ENCODE measurements at regions of chr19 and their contacts with region 1.

Region 1: GRCh38 chr19:11964858-11965645 is at the start of gene ZNF763:
- DNase-seq: peak; percentile 83 to 97
- H3K4me3 ChIP-seq: peak within 1 kb of the TSS; percentile 72 to 87
- H3K27ac ChIP-seq: peak within 1 kb of the TSS; percentile 94
- H3K4me1 ChIP-seq: peaks cover 9 to 17% of the 10 kb centered on the region in 2 donors
- H3K27me3 ChIP-seq: no peaks in the 10 kb centered on the region
- CTCF ChIP-seq: no peak
- total RNA-seq, gene ZNF763: 2.8 TPM

Region 2: DNA sequence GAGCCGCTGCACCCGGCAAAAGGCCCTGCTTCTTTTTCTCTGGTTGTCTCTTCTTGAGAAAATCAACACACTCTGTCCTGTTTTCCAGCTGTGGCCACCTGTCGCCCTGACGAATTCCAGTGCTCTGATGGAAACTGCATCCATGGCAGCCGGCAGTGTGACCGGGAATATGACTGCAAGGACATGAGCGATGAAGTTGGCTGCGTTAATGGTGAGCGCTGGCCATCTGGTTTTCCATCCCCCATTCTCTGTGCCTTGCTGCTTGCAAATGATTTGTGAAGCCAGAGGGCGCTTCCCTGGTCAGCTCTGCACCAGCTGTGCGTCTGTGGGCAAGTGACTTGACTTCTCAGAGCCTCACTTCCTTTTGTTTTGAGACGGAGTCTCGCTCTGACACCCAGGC is 858.6 kb before region 1 on chr19:
- intact Hi-C with region 1: no loop called
- DNase-seq: no peak
- H3K4me3 ChIP-seq: no peak overlapping the region
- H3K27ac ChIP-seq: no peak overlapping the region
- H3K4me1 ChIP-seq: no peaks in the 10 kb centered on the region
- H3K27me3 ChIP-seq: no peaks in the 10 kb centered on the region
- CTCF ChIP-seq: no peak

Region 3: DNA sequence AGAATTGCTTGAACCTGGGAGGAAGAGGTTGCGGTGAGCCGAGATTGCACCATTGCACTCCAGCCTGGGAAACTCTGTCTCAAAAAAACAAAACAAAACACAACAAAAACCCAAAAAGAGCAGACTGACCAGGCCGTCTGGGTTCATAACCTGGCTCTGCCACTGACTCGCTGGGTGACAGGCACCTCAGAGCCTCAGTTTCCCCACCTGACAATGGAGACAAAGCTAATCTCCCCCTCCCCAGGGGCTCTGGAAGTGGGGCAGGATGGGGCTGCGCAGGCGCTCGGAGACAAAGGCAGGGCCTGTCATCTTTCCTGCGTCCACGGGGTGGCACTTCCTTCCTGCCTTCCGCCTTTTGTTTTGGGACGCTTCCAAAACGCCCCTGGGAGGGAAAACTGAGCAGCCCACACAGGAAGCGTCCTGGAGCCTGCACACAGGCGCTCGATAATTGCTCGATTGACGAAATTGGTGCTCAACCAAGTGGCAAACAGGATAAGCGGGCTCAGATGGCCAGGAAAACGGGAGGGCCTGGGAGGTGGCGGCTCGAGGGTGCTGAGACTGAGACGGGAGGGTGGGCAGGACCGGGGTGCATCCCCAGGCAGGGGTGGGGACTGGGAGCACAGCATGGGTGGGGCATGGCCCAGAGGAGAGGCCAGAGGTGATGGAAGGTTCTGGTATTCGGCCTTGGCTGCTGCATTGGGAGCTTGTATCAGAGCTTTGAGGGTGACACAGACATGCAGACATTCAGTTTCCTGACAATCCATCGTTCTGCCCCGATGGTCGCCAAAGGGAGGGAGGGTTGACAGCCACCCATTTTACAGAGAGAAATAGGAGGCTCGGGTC is 827.3 kb before region 1 on chr19:
- intact Hi-C with region 1: loop called (anchors 5 kb)
- DNase-seq: peak; percentile 25 to 91
- H3K4me3 ChIP-seq: peak overlapping the region; percentile 24 to 55
- H3K27ac ChIP-seq: peak overlapping the region; percentile 97
- H3K4me1 ChIP-seq: peaks cover 33 to 43% of the 10 kb centered on the region in 2 donors
- H3K27me3 ChIP-seq: no peaks in the 10 kb centered on the region
- CTCF ChIP-seq: peak; percentile 80 to 95 (median 93)

Region 4: GRCh38 chr19:11482384-11483050 is 482.5 kb before region 1 on chr19:
- intact Hi-C with region 1: no loop called
- DNase-seq: peak; percentile 49 to 87
- H3K4me3 ChIP-seq: peak overlapping the region; percentile 34 to 44
- H3K27ac ChIP-seq: no peak overlapping the region
- H3K4me1 ChIP-seq: peaks cover 3 to 9% of the 10 kb centered on the region in 2 donors
- H3K27me3 ChIP-seq: peaks cover 24% of the 10 kb centered on the region
- CTCF ChIP-seq: peak; percentile 84 to 96 (median 95)

Region 5: DNA sequence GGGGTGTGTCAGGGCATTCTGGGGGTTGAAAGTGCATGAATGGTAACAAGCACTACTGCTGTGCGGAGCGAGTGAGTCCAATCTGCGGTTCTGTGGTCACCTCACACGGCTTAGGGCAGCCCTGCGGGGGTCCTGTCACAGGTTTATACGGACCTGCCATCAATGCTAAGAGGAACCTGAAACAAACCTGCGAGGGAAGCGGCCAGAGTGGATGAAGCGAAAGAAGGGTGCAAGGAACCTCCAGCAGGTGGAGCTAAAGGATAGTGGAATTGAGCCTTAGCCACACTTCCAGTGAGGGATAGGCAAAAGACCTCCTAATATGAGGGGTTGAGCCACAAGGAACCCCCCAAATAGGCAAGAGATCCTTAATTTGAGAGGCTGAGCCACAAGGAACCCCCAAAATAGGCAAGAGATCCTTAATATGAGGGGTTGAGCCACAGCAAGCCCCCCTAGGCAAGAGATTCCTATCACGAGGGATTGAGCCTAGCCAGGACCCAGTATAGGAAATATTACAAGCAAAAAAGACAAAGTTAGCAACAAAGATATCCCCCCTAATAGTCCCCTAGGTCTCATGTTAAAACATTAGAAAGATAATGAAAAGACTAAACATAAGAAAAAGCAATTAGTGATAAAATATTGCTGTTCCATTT is 83.8 kb before region 1 on chr19:
- intact Hi-C with region 1: loop called (anchors 5 kb)
- DNase-seq: no peak
- H3K4me3 ChIP-seq: no peak overlapping the region
- H3K27ac ChIP-seq: no peak overlapping the region
- H3K4me1 ChIP-seq: no peaks in the 10 kb centered on the region
- H3K27me3 ChIP-seq: no peaks in the 10 kb centered on the region
- CTCF ChIP-seq: peak; percentile 37 to 63 (median 47)

Region 6: DNA sequence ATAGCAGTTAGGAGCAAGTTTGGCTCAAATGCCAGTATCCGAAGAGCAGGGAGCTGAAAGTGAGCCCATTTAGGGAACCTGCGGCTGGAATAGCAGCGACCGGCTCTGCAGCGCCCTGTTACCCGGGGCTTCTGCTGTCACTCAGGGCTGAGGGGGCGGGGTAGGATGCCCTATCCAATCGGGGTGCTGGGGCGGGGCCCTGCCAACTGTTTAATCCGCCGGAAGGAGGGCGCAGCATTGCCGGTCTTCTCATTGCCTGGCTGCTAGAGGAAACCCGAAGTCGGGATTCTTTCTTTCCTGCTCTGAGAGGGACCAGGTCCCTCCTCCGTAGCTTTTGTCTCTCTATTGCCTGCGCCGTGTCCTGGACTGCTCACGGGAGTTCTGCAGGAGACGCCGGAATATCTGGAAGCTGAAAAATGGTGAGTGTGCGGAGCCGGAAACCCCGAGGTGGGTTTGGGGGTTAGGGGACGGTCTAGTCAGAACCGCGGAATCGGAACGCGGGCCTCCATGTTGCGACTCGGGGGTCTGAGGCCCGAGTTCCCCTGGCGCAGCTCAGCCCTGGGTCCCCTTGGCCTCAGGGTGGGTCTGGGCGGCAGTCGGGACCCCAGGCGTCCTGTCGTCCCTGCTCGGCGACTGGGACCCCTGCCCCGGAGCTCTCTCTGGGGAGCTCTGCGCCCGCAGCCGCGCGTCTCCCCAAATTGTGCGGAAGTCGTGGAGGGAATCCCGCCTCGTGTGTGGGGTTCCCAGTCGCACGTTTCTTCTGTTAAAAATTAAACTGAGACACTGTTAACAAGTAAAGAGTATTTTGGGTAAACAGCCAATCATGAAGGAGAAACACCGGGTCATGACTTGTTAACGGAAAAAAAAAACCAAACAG is 22.6 kb after region 1 on chr19:
- intact Hi-C with region 1: loop called (anchors 1 kb)
- DNase-seq: peak; percentile 90 to 98
- H3K4me3 ChIP-seq: peak overlapping the region; percentile 80 to 92
- H3K27ac ChIP-seq: peak overlapping the region; percentile 83 to 88
- H3K4me1 ChIP-seq: no peaks in the 10 kb centered on the region
- H3K27me3 ChIP-seq: no peaks in the 10 kb centered on the region
- CTCF ChIP-seq: no peak

Region 7: DNA sequence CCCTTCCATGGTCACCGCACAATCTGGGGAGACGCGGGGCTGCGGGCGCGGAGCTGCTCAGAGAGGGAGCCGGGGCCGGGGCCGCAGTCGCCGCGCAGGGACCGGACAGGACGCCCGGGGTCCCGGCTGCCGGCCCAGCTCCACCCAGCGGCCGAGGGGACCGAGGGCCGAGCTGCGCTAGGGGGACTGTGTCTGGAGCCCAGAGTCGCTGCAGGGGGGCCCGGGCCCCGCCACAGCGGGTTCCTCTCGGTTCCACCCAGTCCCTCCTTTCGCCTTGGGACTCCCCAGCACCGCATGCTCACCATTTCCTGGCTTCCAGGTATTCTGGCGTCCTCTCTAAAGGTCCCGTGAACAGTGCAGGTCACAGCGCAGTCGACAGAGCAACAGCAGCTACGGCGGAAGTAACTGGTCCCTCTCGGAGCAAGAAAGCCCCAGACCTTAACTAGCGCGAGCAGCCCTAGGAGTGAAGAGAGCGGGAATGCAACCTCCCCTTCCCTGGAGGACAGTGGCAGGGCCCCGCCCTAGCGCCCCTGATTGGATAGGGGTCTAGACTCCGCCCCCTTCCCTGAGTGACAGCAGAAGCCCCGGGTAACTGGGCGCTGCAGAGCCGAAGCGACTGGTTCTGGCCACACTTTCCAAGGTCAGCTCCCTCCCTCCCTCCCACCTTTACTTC is 87.6 kb after region 1 on chr19 and contains the start of gene ZNF878:
- intact Hi-C with region 1: loop called (anchors 5 kb)
- DNase-seq: peak; percentile 63 to 93
- H3K4me3 ChIP-seq: peak within 1 kb of the TSS; percentile 77 to 83
- H3K27ac ChIP-seq: peak within 1 kb of the TSS; percentile 59 to 65
- H3K4me1 ChIP-seq: peaks cover 0 to 2% of the 10 kb centered on the region in 2 donors
- H3K27me3 ChIP-seq: no peaks in the 10 kb centered on the region
- CTCF ChIP-seq: peak in 2 of 3 experiments; percentile 7 to 11
- total RNA-seq, gene ZNF878: not detected

Region 8: DNA sequence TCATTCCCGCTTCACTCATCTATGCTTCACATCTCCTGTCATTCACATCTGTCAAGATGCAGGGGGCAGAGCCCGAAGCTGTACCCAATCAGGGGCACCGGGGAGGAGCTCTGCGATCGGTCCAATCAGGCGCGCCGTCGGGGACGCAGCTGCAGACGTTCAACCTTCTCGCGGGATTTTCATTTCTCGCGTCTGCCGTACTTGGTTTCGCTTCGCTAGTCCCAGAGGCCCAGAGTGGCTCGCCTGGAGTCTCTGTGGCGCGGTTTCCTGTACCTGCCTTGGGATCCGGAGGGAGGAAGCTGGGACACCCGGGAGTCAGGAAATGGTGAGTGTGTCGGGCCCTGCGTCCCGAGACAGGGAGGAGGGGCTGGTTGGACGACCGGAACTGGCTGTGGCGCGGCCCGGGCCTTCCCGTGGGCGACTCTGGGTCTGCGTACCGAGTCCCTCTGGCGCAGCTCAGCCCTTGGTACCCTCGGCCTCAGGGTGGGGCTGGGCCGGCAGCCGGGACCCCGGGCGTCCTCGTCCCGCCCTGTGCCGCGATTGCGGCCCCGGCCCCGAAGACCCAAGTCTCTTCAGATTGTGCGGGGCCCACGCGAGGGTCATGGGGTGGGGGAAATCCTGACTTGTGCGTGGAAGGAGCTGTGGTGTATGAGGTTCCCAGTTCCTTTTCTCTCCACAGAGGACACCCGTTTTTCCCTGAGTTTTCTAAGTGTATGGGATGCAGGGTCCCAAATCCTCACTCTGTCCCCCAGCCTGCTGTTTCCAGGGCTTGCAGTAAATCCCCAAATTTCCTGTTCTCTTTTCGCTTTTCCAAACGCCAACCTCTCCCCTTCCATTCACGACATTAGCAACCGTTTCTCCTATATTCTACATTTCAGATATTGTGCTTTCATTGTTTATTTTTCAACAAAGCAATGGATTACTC is 198.1 kb after region 1 on chr19 and contains the start of gene ZNF136:
- intact Hi-C with region 1: loop called (anchors 5 kb)
- DNase-seq: peak; percentile 89 to 96
- H3K4me3 ChIP-seq: peak within 1 kb of the TSS; percentile 83 to 84
- H3K27ac ChIP-seq: peak within 1 kb of the TSS; percentile 90 to 94
- H3K4me1 ChIP-seq: peaks cover 0 to 12% of the 10 kb centered on the region in 2 donors
- H3K27me3 ChIP-seq: no peaks in the 10 kb centered on the region
- CTCF ChIP-seq: no peak
- total RNA-seq, gene ZNF136: 1.9 TPM

Measured in ascending aorta (tissue), 2 donors.